ENCODE measurements at regions of chr3 and their contacts with region 1.

Region 1: GRCh38 chr3:88003115-88003755 is 55.6 kb downstream of the CGGBP1 start:
- DNase-seq: no peak
- ATAC-seq: peak; percentile 67
- H3K4me3 ChIP-seq: no peak overlapping the region
- H3K27ac ChIP-seq: no peak overlapping the region
- H3K4me1 ChIP-seq: no peaks in the 10 kb centered on the region
- H3K27me3 ChIP-seq: no peaks in the 10 kb centered on the region
- CTCF ChIP-seq: peak; percentile 58 to 76 (median 59); a peak in 5 of 6 replicates
- EP300 ChIP-seq: no peak
- POLR2A ChIP-seq: no peak
- RAD21 ChIP-seq: peak; percentile 86

Region 2: GRCh38 chr3:87260270-87260669 is 743.0 kb before region 1 on chr3:
- CTCF ChIA-PET with region 1: interaction called, 21 read pairs
- POLR2A ChIA-PET with region 1: no interaction called
- RAD21 ChIA-PET with region 1: interaction called, 12 read pairs
- SMC1A ChIA-PET with region 1: interaction called, 3 read pairs
- in situ Hi-C with region 1: no loop called
- intact Hi-C with region 1: loop called (anchors 10 kb)
- DNase-seq: no peak
- ATAC-seq: peak; percentile 74
- H3K4me3 ChIP-seq: no peak overlapping the region
- H3K27ac ChIP-seq: no peak overlapping the region
- H3K4me1 ChIP-seq: no peaks in the 10 kb centered on the region
- H3K27me3 ChIP-seq: no peaks in the 10 kb centered on the region
- CTCF ChIP-seq: peak; percentile 58 to 66 (median 63)
- EP300 ChIP-seq: no peak
- POLR2A ChIP-seq: no peak
- RAD21 ChIP-seq: peak; percentile 50

Region 3: DNA sequence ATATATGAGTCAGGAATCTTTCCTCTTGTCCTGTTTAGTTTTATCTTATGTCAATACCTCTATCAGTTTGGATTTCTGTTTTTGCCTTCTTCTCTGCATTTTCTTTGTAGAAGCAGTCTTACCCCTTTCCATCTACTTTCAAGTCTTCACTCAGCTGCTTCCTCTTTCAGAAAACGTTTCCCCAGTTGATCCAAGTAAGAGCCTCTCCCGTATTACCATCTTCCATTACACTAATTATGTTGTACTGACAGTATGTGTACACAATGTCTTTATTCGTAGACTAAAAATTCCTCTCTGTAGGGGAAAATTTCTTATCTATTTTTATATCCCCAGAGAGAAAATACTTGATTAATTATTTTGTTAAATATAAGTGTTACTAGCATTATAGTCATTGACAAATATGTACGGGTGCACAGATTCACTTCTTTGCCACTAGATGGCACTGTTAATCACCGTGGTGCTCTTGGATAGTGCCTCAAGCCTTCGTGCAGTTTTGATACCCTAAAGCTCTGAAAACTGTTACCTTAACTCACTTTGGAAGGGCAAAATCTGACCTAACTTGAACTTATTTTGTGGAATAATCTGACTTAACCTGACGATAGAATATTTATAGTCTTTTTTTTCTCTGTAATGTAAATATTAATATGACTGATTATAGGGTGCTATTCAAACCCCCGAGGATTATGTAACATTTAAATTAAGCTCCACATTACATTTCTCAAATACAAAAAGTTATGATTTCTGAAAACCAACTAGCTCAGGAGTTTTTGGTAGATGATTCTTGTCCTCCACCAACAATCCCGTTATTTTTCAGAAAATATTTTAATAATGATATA is 652.7 kb before region 1 on chr3:
- CTCF ChIA-PET with region 1: interaction called, 46 read pairs
- POLR2A ChIA-PET with region 1: no interaction called
- RAD21 ChIA-PET with region 1: interaction called, 21 read pairs
- SMC1A ChIA-PET with region 1: interaction called, 28 read pairs
- in situ Hi-C with region 1: loop called (anchors 5 kb)
- intact Hi-C with region 1: loop called (anchors 1 kb)
- DNase-seq: no peak
- ATAC-seq: peak; percentile 96
- H3K4me3 ChIP-seq: no peak overlapping the region
- H3K27ac ChIP-seq: no peak overlapping the region
- H3K4me1 ChIP-seq: no peaks in the 10 kb centered on the region
- H3K27me3 ChIP-seq: no peaks in the 10 kb centered on the region
- CTCF ChIP-seq: peak; percentile 71 to 87 (median 81)
- EP300 ChIP-seq: no peak
- POLR2A ChIP-seq: no peak
- RAD21 ChIP-seq: peak; percentile 76

Region 4: GRCh38 chr3:87771341-87772192 is 231.7 kb before region 1 on chr3:
- CTCF ChIA-PET with region 1: interaction called, 17 read pairs
- POLR2A ChIA-PET with region 1: no interaction called
- RAD21 ChIA-PET with region 1: interaction called, 9 read pairs
- SMC1A ChIA-PET with region 1: interaction called, 11 read pairs
- in situ Hi-C with region 1: loop called (anchors 10 kb)
- intact Hi-C with region 1: loop called (anchors 1 kb)
- DNase-seq: peak; percentile 8
- ATAC-seq: peak; percentile 96
- H3K4me3 ChIP-seq: no peak overlapping the region
- H3K27ac ChIP-seq: no peak overlapping the region
- H3K4me1 ChIP-seq: no peaks in the 10 kb centered on the region
- H3K27me3 ChIP-seq: no peaks in the 10 kb centered on the region
- CTCF ChIP-seq: peak; percentile 73 to 87 (median 82)
- EP300 ChIP-seq: no peak
- POLR2A ChIP-seq: no peak
- RAD21 ChIP-seq: peak; percentile 61

Region 5: GRCh38 chr3:88105325-88105724 is 102.1 kb after region 1 on chr3:
- CTCF ChIA-PET with region 1: no interaction called
- POLR2A ChIA-PET with region 1: no interaction called
- RAD21 ChIA-PET with region 1: no interaction called
- SMC1A ChIA-PET with region 1: no interaction called
- in situ Hi-C with region 1: no loop called
- intact Hi-C with region 1: no loop called
- DNase-seq: no peak
- ATAC-seq: no peak
- H3K4me3 ChIP-seq: no peak overlapping the region
- H3K27ac ChIP-seq: no peak overlapping the region
- H3K4me1 ChIP-seq: no peaks in the 10 kb centered on the region
- H3K27me3 ChIP-seq: no peaks in the 10 kb centered on the region
- CTCF ChIP-seq: no peak
- EP300 ChIP-seq: no peak
- POLR2A ChIP-seq: no peak
- RAD21 ChIP-seq: no peak

Region 6: GRCh38 chr3:88180398-88180999 is 177.3 kb after region 1 on chr3:
- CTCF ChIA-PET with region 1: interaction called, 6 read pairs
- POLR2A ChIA-PET with region 1: no interaction called
- RAD21 ChIA-PET with region 1: interaction called, 8 read pairs
- SMC1A ChIA-PET with region 1: interaction called, 5 read pairs
- in situ Hi-C with region 1: no loop called
- intact Hi-C with region 1: loop called (anchors 2 kb)
- DNase-seq: peak; percentile 27
- ATAC-seq: peak; percentile 89
- H3K4me3 ChIP-seq: no peak overlapping the region
- H3K27ac ChIP-seq: no peak overlapping the region
- H3K4me1 ChIP-seq: no peaks in the 10 kb centered on the region
- H3K27me3 ChIP-seq: no peaks in the 10 kb centered on the region; a peak in 1 of 4 replicates
- CTCF ChIP-seq: peak; percentile 58 to 69 (median 64)
- EP300 ChIP-seq: no peak
- POLR2A ChIP-seq: no peak
- RAD21 ChIP-seq: peak; percentile 84

Region 7: DNA sequence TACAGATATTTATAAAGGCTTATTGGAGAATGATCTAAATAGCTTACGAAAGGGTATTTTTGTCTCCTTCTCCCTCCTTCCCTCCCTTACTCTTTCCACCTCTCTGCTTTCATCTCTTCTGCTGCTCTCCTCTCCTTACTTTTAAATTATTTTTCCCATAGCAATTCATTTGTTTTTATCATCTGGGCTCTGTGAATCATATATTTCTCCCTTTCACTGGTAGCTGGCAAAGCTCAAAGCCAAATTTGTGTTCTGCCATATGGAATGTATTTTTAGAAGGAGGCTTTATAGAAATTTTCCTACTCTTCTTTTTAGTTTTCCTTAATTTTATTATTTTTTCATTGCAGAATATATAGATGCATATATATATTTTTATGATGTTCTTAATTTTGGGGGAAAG is 532.3 kb after region 1 on chr3:
- CTCF ChIA-PET with region 1: no interaction called
- POLR2A ChIA-PET with region 1: no interaction called
- RAD21 ChIA-PET with region 1: no interaction called
- SMC1A ChIA-PET with region 1: no interaction called
- in situ Hi-C with region 1: no loop called
- intact Hi-C with region 1: no loop called
- DNase-seq: no peak
- ATAC-seq: no peak
- H3K4me3 ChIP-seq: no peak overlapping the region
- H3K27ac ChIP-seq: no peak overlapping the region
- H3K4me1 ChIP-seq: no peaks in the 10 kb centered on the region
- H3K27me3 ChIP-seq: no peaks in the 10 kb centered on the region
- CTCF ChIP-seq: no peak
- EP300 ChIP-seq: no peak
- POLR2A ChIP-seq: no peak
- RAD21 ChIP-seq: no peak